Activated CD8-positive, alpha-beta memory T cell treated with anti-CD3 and anti-CD28 coated beads, Interleukin-2, amount 10 ng/mL, durations not matched to agents 7 days and 5 days (primary cell): ENCODE measurements at regions of chr20 and their contacts with region 1.

Region 1: DNA sequence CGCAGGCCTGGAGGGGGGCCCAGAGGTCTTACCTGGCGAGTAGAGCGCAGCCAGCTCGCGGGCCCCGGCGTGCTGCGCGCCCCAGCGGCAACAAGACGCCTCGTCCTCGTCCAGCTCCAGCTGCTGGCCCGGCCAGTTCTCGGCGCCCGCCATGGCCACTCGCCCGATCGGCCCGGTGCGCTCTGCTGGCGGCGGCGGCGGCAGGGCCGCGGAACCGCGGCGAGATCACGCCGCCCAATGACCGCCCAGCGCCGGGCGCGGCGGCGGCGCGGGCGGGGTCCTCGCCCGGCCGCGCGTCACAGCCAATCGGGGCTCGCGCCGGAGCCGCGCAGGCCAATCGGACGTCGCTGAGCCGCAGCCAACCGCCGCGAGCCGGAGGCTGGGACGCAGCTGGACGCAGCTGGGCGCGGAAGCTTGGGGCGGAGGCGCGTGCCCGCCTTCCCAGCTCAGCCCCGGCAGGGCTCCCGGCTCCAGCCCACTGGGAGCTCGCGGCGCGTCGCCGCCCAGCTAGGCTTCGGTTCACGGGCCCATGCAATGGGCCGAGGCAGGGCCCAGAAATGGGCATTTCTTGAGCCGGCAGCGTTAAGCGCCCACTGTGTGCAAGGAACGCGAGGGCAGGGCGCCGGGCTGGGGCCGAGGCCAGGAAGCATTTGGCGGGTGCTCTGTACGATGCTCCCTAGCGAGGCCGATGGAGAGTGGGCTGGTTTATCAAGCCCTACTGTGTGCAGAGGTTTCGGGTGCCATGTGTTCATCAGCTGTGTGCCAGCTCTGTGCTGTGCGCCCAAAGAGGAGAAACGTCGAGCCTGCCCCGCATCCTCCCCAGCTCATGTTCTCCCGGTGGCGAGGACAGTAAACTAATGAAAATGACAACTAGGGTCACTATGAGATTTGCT is at the start of gene PEDS1:
- DNase-seq: peak; percentile 90
- ATAC-seq: peak; percentile 98
- H3K4me3 Mint-ChIP-seq: peak within 1 kb of the TSS; percentile 89
- H3K27ac Mint-ChIP-seq: peak within 1 kb of the TSS; percentile 88
- H3K4me1 Mint-ChIP-seq: peaks cover 37% of the 10 kb centered on the region
- H3K27me3 Mint-ChIP-seq: no peaks in the 10 kb centered on the region
- total RNA-seq, gene PEDS1: 24.2 to 25.4 TPM

Region 2: GRCh38 chr20:49562311-49563014 is 591.3 kb before region 1 on chr20:
- CTCF ChIA-PET with region 1: no interaction called
- DNase-seq: no peak
- ATAC-seq: no peak
- H3K4me3 Mint-ChIP-seq: no peak overlapping the region
- H3K27ac Mint-ChIP-seq: no peak overlapping the region
- H3K4me1 Mint-ChIP-seq: peaks cover 17% of the 10 kb centered on the region
- H3K27me3 Mint-ChIP-seq: peaks cover 24% of the 10 kb centered on the region

Region 3: GRCh38 chr20:50085452-50086365 is 68.0 kb before region 1 on chr20:
- CTCF ChIA-PET with region 1: interaction called, 18 read pairs
- DNase-seq: peak; percentile 54
- ATAC-seq: peak; percentile 79
- H3K4me3 Mint-ChIP-seq: peak overlapping the region; percentile 11
- H3K27ac Mint-ChIP-seq: peak overlapping the region; percentile 81
- H3K4me1 Mint-ChIP-seq: peaks cover 26% of the 10 kb centered on the region
- H3K27me3 Mint-ChIP-seq: no peaks in the 10 kb centered on the region

Region 4: GRCh38 chr20:50115591-50116372 is 37.9 kb before region 1 on chr20:
- CTCF ChIA-PET with region 1: interaction called, 33 read pairs
- DNase-seq: peak; percentile 95
- ATAC-seq: peak; percentile 77
- H3K4me3 Mint-ChIP-seq: peak overlapping the region; percentile 82
- H3K27ac Mint-ChIP-seq: peak overlapping the region; percentile 86
- H3K4me1 Mint-ChIP-seq: peaks cover 44% of the 10 kb centered on the region
- H3K27me3 Mint-ChIP-seq: no peaks in the 10 kb centered on the region

Region 5: GRCh38 chr20:50120897-50121693 is 32.6 kb before region 1 on chr20:
- CTCF ChIA-PET with region 1: interaction called, 33 read pairs
- DNase-seq: peak; percentile 71
- ATAC-seq: peak; percentile 72
- H3K4me3 Mint-ChIP-seq: no peak overlapping the region
- H3K27ac Mint-ChIP-seq: no peak overlapping the region
- H3K4me1 Mint-ChIP-seq: peaks cover 8% of the 10 kb centered on the region
- H3K27me3 Mint-ChIP-seq: no peaks in the 10 kb centered on the region